ENCODE measurements at regions of chr6 and their contacts with region 1.

Region 1: GRCh38 chr6:125668071-125668840 is 81.2 kb upstream of the HEY2 start:
- DNase-seq: peak in 8 of 10 donors; percentile 14 to 76 (median 54)
- H3K4me3 ChIP-seq: peak overlapping the region in 4 of 59 donors; percentile 4 to 15 (median 7)
- H3K27ac ChIP-seq: peak overlapping the region in 1 of 59 donors; percentile 27
- H3K27me3 ChIP-seq: no peaks in the 10 kb centered on the region
- CTCF ChIP-seq: peak in 3 of 56 donors; percentile 9 to 21 (median 14)

Region 2: GRCh38 chr6:125732398-125732797 is 64.1 kb after region 1 on chr6:
- intact Hi-C with region 1: loop called in 1 of 2 experiments (anchors 10 kb)
- DNase-seq: no peak
- H3K4me3 ChIP-seq: no peak overlapping the region
- H3K27ac ChIP-seq: peak overlapping the region in 10 of 59 donors; percentile 83 to 96 (median 89)
- H3K27me3 ChIP-seq: no peaks in the 10 kb centered on the region
- CTCF ChIP-seq: no peak